ENCODE measurements at regions of chr2 and their contacts with region 1.

Region 1: GRCh38 chr2:25294573-25295462 is 46.9 kb downstream of the DNMT3A start:
- DNase-seq: peak; percentile 80
- H3K4me3 ChIP-seq: peak overlapping the region in 1 of 4 donors; percentile 12
- H3K27ac ChIP-seq: peak overlapping the region; percentile 81 to 85 (median 84)
- H3K4me1 ChIP-seq: peaks cover 13 to 32% (median 18%) of the 10 kb centered on the region in 4 donors
- H3K27me3 ChIP-seq: no peaks in the 10 kb centered on the region
- CTCF ChIP-seq: no peak
- EP300 ChIP-seq: no peak
- POLR2A ChIP-seq: peak; percentile 39

Region 2: GRCh38 chr2:25151718-25152117 is 143.1 kb before region 1 on chr2:
- in situ Hi-C with region 1: no loop called
- intact Hi-C with region 1: no loop called
- DNase-seq: no peak
- H3K4me3 ChIP-seq: no peak overlapping the region
- H3K27ac ChIP-seq: no peak overlapping the region
- H3K4me1 ChIP-seq: no peaks in the 10 kb centered on the region
- H3K27me3 ChIP-seq: no peaks in the 10 kb centered on the region
- CTCF ChIP-seq: no peak
- EP300 ChIP-seq: no peak
- POLR2A ChIP-seq: no peak

Region 3: DNA sequence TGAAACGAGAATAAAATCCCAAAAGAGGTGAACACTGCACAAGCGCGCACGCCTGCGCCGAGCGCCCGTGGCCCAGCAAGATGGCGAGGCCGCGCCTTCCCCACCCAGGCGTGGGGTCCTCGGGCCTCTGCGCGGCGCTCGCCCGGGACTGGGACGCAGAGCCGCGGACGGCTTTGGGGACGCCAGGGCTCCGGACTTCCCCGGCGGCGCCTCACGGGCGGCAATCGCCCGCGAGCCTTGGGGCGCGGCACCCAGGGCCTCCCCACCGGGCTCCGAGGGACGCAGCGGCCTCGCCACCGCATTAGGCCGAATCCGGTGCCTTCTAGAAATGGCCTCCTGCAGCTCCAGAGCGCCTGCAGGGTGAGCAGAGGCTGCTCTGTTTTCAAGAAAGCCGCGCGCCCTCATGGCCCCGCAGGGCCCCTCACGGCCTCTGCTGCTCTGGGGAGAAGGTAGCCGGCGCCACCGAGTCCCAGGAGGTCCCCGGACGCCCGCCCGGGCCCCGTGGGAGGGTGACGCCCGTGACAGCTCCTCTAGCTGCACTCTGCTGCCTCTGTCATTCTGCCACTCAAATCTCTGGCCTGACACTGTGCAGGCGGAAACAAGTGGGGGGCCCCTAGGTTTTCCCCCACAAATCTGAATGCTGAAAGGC is 90.5 kb before region 1 on chr2:
- in situ Hi-C with region 1: no loop called
- intact Hi-C with region 1: no loop called
- DNase-seq: no peak
- H3K4me3 ChIP-seq: peak overlapping the region in 3 of 4 donors; percentile 13 to 25 (median 17)
- H3K27ac ChIP-seq: peak overlapping the region in 1 of 4 donors; percentile 49
- H3K4me1 ChIP-seq: no peaks in the 10 kb centered on the region
- H3K27me3 ChIP-seq: peaks cover 7% of the 10 kb centered on the region
- CTCF ChIP-seq: no peak
- EP300 ChIP-seq: no peak
- POLR2A ChIP-seq: no peak

Region 4: DNA sequence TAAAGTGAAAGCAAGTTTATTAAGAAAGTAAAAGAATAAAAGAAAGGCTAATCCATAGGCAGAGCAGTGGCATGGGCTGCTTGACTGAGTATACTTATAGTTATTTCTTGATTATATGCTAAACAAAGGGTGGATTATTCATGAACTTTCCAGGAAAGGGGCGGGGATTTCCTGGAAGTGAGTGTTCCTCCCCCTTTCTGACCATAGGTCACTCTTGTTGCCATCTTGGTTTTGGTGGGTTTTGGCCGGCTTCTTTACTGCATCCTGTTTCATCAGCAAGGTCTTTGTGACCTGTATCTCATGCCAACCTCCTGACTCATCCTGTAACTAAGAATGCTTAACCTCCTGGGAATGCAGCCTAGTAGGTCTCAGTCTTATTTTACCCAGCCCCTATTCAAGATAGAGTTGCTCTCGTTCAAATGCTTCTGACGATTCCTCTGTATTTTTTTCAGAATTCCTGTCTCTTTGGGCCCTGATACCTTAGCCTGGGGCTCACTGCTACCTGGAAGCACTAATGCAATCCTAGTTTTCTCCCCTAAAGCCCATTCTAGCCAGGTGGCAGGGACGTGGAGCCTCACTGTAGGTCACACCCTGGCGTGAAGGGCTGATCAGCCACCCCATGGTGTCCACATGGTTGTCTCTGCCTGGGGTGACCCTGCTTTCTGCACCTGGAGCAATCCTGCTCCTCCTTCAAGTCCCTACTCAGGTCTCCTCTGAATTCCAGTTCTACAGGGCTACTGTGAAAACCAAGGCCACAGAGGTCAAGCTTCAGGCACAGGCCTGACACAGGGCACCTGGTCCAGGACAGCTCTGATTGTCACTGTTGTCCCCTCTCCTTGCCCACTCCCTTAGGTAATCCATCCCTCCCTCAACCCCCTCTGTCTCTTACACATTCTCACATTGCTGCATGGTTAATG is 1463.3 kb after region 1 on chr2:
- in situ Hi-C with region 1: no loop called
- intact Hi-C with region 1: loop called (anchors 10 kb)
- DNase-seq: no peak
- H3K4me3 ChIP-seq: no peak overlapping the region
- H3K27ac ChIP-seq: no peak overlapping the region
- H3K4me1 ChIP-seq: peaks cover 0 to 9% (median 3%) of the 10 kb centered on the region in 4 donors
- H3K27me3 ChIP-seq: no peaks in the 10 kb centered on the region
- CTCF ChIP-seq: no peak
- EP300 ChIP-seq: no peak
- POLR2A ChIP-seq: no peak